Motor neuron (in vitro differentiated cells): ENCODE measurements at regions of chr2 and their contacts with region 1.

Region 1: DNA sequence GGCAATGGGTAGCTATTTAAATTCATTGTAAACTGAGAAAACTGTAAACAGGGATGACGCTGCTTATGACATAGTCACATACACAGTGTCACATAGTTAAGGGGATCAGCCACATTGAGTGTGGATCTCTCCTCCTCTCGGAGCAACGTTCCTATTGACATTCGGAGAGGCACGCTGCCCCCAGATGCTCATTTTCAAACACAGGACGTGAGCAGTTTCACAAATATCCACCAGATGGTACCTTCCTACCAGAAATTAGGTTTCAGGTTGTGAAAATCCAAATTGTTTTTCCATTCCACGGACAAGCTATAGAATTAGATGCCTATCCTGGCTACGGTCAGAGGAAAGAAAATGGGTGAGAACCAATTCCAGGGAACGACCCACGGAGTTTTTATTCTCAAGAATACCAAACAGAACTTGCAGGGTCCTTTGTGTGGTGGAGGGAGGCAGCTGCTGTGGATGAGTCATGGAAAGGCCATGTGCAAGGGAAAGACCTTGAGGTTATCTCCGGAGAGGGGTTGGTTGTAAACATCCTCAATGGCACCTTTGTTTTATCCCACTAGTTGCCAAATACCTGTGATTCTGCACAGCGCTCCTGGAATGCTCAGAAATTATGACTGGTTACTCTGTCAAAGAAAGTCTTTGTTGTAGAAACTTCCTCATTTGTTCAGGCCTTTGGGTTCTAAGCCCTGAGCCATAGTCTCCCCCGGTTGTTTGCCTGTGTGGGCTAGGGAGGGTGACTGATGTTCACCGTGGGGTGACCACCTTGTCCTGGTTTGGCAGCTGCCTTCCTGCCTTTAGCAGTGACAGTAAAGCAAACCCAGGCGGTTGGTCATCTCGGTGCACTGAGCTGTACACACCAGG is 88.0 kb downstream of the ACTR3 start:
- ATAC-seq: peak; percentile 33 to 56 (median 50)
- H3K4me3 ChIP-seq: no peak overlapping the region
- H3K27ac ChIP-seq: no peak overlapping the region
- H3K4me1 ChIP-seq: peaks cover 3 to 6% of the 10 kb centered on the region in 2 donors

Region 2: DNA sequence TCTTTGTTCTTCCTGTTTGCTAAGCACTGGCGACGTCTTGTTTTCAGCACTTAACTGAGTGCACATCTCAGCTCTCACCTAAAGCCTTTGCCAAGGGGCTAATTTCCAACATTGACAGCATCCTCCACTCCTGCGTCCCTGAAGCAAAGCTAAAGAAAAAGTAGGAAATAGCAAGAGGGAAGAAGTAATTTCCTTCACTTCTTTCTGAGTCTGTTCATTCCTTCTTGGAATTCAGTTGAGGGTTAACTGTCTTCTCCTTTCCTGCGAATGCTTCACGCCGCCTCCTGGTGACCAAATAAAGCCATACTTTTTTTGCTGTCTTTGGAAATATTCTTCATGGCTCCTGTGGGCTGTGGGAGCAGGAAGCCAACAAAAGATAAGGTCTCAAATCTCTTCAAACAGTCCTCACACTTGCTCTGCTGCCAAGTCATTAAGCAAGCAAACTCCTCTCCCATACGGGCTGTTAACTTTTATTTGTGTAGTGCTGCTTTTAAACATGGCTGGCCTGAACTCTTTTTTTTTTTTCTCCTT is 565.4 kb after region 1 on chr2:
- in situ Hi-C with region 1: loop called in 1 of 9 experiments (anchors 25 kb)
- ATAC-seq: peak in 4 of 8 experiments; percentile 38 to 81 (median 52)
- H3K4me3 ChIP-seq: no peak overlapping the region
- H3K27ac ChIP-seq: no peak overlapping the region
- H3K4me1 ChIP-seq: peaks cover 4 to 6% of the 10 kb centered on the region in 2 donors

Region 3: DNA sequence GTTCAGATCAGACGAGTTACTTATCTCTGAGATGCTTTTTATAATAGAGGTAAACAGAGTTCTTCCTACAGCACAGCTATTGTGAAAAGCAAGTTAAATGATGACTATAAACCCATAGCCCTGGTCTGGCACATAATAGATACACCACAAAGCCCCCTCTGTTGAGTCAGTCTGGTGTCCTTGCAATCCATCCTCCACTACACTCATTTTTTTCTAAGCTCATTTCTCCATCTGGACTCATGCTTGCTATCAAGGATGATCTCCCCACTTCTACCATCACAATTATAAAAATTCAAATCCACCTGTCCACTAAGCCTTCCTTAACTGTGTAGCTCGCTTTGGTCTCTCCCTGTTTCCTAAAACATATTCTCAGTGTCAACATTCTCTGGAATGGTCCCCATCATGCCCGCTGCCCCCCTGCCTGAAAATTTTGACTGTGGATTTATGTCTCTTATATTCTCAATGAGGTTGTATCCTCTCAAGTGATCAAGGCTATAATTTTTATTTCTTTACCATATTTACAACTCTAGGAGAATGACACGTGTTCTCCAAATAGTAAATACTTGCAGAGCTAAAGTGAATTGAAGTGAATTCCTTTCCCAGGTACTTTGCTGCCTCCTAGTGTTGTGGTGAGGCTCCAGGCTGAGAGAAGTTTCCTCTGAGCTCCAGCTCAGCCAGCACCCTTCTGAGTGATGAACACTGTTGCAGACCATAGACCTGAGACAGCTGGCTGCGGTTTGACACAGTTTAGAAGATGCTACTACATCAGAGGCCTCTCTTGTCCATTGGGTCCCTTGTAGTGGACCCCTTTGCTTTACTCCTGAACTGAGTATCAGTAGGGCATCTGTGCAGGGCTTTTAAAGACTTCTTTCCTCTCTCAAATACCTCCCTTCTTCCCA is 573.3 kb after region 1 on chr2:
- in situ Hi-C with region 1: loop called in 3 of 9 experiments (anchors 25 kb)
- ATAC-seq: peak; percentile 68 to 92 (median 74)
- H3K4me3 ChIP-seq: no peak overlapping the region
- H3K27ac ChIP-seq: no peak overlapping the region
- H3K4me1 ChIP-seq: no peaks in the 10 kb centered on the region